ENCODE measurements at regions of chr4 and their contacts with region 1.

Region 1: DNA sequence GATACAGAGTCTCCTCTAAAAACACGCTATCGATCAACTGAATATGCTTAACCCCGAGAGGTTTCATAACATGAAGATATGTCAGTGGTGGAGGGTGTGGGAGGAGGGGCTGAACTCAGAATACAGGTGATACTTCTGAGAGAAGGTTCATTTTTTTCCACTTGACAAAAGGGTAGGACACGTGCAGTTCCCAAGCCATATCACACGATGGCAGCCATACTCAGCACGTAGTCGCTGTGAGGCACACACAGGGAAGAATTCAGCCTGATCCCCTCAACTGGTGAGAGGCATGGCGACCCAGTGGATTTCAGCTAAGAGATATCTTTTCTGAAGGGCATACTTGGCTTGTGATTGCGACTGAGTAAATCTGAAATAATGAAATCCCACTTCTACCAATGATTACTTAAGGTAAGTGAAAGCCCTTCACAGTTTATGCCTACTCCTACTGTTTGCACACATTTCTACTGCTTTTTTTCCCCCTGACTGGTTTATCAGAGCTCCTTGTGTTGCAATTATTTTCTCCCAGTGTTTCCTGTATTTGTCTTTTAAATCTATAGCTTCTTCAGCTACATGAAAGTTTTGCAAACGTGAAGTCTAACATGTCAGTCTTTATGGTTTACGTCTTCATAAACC is 133.1 kb downstream of the CORIN start:
- ATAC-seq: peak; percentile 53 to 87 (median 77)
- H3K4me3 ChIP-seq: no peak overlapping the region
- H3K27ac ChIP-seq: no peak overlapping the region
- H3K4me1 ChIP-seq: peaks cover 0 to 7% of the 10 kb centered on the region in 2 donors

Region 2: DNA sequence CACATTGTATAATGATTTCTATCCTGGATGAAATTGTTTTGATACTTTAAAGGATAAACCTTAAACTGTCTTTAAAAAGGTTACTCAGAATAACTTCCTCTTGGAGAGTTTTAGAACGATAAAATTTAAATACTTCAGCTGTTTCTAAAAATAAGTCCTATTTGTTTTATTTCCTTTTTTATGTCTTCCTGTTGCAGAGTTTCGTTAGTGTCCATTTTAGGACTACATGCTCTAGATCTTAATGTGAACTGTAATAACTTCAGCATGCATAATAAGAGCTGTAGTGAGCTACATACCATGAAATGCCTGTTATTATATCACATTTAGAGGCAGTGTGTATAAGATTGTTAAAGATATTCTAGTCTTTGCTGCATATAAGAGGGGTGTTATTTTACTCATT is 205.1 kb before region 1 on chr4:
- in situ Hi-C with region 1: no loop called
- ATAC-seq: peak in 1 of 8 experiments; percentile 29
- H3K4me3 ChIP-seq: no peak overlapping the region
- H3K27ac ChIP-seq: no peak overlapping the region
- H3K4me1 ChIP-seq: no peaks in the 10 kb centered on the region

Region 3: GRCh38 chr4:47598320-47598719 is 106.5 kb before region 1 on chr4:
- in situ Hi-C with region 1: no loop called
- ATAC-seq: no peak
- H3K4me3 ChIP-seq: no peak overlapping the region
- H3K27ac ChIP-seq: no peak overlapping the region
- H3K4me1 ChIP-seq: no peaks in the 10 kb centered on the region

Region 4: DNA sequence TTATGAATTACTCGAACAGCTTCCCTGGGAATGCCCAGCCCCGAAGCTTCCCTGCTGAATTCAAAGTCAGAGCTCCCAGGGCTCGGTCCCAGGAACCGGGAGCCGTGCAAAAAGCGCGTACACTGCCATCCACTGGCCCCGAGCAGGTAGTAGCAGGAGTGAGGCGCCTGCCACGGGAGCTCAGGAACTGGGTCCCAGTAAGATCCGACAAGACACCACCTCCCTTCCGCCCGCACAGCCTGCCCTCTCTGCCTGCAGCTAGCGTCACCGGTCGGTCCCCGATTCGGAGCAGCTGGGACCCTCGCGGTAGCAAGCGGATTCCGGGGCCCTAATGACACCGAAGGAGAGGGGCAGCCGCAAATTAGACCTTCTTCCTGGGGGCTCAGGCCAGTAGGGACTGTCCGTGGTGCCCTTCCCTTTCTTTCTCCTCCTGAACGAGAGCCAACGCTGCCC is 131.9 kb after region 1 on chr4:
- in situ Hi-C with region 1: loop called in 1 of 9 experiments (anchors 5 kb)
- ATAC-seq: peak; percentile 88 to 96 (median 92)
- H3K4me3 ChIP-seq: peak overlapping the region; percentile 23 to 35 (median 28)
- H3K27ac ChIP-seq: no peak overlapping the region
- H3K4me1 ChIP-seq: peaks cover 6 to 10% of the 10 kb centered on the region in 2 donors

Measured in motor neuron (in vitro differentiated cells).